Gastrocnemius medialis (tissue), 4 donors: ENCODE measurements at regions of chr16 and their contacts with region 1.

Region 1: GRCh38 chr16:69123910-69124309 is 8.5 kb downstream of the CHTF8 start:
- DNase-seq: no peak
- ATAC-seq: peak in 1 of 2 donors; percentile 62
- H3K4me3 ChIP-seq: no peak overlapping the region
- H3K27ac ChIP-seq: no peak overlapping the region
- H3K4me1 ChIP-seq: peaks cover 6 to 7% of the 10 kb centered on the region in 2 donors
- H3K27me3 ChIP-seq: no peaks in the 10 kb centered on the region
- CTCF ChIP-seq: peak; percentile 41 to 69 (median 65)
- POLR2A ChIP-seq: no peak

Region 2: GRCh38 chr16:68848786-68849185 is 275.1 kb before region 1 on chr16:
- in situ Hi-C with region 1: no loop called
- intact Hi-C with region 1: loop called (anchors 2 kb)
- DNase-seq: no peak
- ATAC-seq: no peak
- H3K4me3 ChIP-seq: no peak overlapping the region
- H3K27ac ChIP-seq: no peak overlapping the region
- H3K4me1 ChIP-seq: peaks cover 5 to 9% of the 10 kb centered on the region in 2 donors
- H3K27me3 ChIP-seq: no peaks in the 10 kb centered on the region
- CTCF ChIP-seq: no peak
- POLR2A ChIP-seq: no peak